Naive thymus-derived CD4-positive, alpha-beta T cell (primary cell): ENCODE measurements at regions of chr4 and their contacts with region 1.

Region 1: DNA sequence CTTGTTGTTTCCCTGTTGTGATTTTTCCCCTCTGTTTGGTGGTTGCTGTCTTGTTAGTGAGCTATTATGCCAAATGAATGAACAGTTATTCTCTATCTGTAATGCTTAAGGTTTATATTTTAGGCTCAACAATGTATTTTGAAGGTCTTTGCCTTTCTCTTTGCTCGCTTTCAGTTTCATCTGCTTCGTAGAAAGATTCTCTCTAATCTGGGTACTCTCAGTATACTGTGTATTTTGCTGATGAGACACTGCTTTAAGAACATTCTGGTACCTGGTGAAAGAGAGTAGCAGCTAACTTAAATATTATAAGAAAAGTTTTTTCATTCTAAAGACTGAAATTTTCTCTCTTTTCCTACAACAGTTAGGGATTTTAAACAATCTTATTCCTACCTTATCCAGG is 1274.7 kb upstream of the PABPC4L start:
- DNase-seq: no peak
- ATAC-seq: no peak
- H3K4me3 ChIP-seq: no peak overlapping the region
- H3K4me3 Mint-ChIP-seq: no peak overlapping the region
- H3K27ac ChIP-seq: no peak overlapping the region
- H3K27ac Mint-ChIP-seq: no peak overlapping the region
- H3K4me1 ChIP-seq: no peaks in the 10 kb centered on the region
- H3K4me1 Mint-ChIP-seq: no peaks in the 10 kb centered on the region
- H3K27me3 ChIP-seq: no peaks in the 10 kb centered on the region
- H3K27me3 Mint-ChIP-seq: no peaks in the 10 kb centered on the region

Region 2: DNA sequence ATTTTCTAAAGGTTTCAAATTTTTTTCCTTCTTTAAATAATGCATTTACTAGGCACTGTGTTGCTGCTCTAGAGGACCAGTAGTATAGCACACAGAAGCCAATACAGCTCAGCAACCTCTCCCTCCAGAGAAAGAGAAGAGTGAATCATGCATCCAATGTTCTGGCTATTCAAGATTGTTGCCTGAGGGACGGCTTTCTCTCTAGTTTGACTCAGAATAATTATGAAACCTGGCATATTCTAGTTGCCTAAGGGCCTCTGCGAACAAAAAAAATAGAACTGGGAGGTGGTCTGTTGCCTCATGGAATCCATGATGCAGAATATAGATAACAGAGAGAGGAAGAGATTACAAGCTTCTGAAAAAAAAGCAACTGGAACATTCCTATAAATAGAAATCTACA is 41.3 kb before region 1 on chr4:
- CTCF ChIA-PET with region 1: no interaction called
- POLR2A ChIA-PET with region 1: no interaction called
- intact Hi-C with region 1: no loop called
- DNase-seq: no peak
- ATAC-seq: no peak
- H3K4me3 ChIP-seq: no peak overlapping the region
- H3K4me3 Mint-ChIP-seq: no peak overlapping the region
- H3K27ac ChIP-seq: no peak overlapping the region
- H3K27ac Mint-ChIP-seq: no peak overlapping the region
- H3K4me1 ChIP-seq: no peaks in the 10 kb centered on the region
- H3K4me1 Mint-ChIP-seq: no peaks in the 10 kb centered on the region
- H3K27me3 ChIP-seq: no peaks in the 10 kb centered on the region
- H3K27me3 Mint-ChIP-seq: no peaks in the 10 kb centered on the region

Region 3: DNA sequence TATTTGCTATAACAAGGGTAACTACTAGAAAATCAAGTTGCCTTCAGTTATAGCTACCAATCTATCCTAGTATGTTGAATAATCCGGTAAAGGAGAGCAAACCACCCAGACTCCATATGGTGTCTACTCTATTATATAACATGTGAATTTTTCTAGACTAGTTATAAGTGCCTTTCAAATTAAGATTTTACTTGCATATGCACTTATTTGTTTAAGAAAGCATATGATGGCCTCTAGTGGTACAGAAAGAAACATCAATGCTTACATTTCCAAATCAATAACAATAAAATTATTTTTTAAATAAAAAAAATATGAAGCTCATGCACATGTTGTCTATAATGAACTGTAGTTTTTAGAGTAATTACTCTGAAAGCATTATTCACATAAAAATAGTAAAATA is 241.7 kb after region 1 on chr4:
- CTCF ChIA-PET with region 1: no interaction called
- POLR2A ChIA-PET with region 1: no interaction called
- intact Hi-C with region 1: loop called in 1 of 2 experiments (anchors 5 kb)
- DNase-seq: no peak
- ATAC-seq: no peak
- H3K4me3 ChIP-seq: no peak overlapping the region
- H3K4me3 Mint-ChIP-seq: no peak overlapping the region
- H3K27ac ChIP-seq: no peak overlapping the region
- H3K27ac Mint-ChIP-seq: no peak overlapping the region
- H3K4me1 ChIP-seq: no peaks in the 10 kb centered on the region
- H3K4me1 Mint-ChIP-seq: no peaks in the 10 kb centered on the region
- H3K27me3 ChIP-seq: no peaks in the 10 kb centered on the region
- H3K27me3 Mint-ChIP-seq: no peaks in the 10 kb centered on the region